Transverse colon (tissue), 4 donors: ENCODE measurements at regions of chr20 and their contacts with region 1.

Region 1: DNA sequence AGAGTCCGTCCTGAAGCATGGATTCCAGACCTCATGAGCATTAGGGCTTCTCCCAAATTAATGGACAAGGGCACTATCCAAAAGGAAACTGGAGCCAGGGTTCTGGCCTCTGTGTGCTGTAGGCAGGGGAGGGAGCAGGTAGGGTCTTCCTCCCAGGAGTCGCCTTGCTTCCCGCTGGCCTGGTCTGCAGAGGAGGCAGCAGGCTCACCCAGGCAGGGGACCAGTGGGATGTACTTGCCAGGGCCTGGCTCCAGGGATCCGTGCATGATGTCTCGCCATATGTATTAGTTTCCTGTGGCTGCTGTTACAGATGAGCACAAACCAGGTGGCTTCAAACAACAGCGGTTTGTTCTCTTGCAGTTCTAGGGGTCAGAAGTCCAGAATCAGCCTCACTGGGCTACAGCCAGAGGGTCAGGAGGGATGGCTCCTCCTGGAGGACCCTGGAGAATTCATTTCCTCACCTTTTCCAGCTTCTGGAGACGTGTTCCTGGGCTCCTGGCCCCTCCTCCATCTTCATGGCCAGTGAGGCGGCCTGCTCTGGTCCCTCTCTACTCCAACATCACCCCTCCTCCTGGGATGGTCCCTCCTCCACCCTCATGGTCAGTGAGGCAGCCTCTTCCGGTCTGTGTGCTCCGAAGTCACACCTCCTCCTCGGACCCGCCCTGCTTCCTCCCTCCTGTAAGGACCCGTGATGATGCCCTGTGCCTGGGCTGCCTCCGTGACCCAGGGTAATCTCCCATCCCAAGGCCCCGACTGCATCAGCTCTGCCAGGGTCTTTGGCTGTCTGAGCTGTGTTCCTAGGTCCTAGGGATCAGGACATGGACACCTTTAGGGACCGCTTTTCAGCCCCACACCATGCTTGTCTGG is 329.1 kb downstream of the CDH4 start:
- DNase-seq: no peak
- H3K4me3 ChIP-seq: no peak overlapping the region
- H3K27ac ChIP-seq: no peak overlapping the region
- H3K4me1 ChIP-seq: no peaks in the 10 kb centered on the region
- H3K27me3 ChIP-seq: no peaks in the 10 kb centered on the region
- CTCF ChIP-seq: no peak
- EP300 ChIP-seq: no peak
- POLR2A ChIP-seq: no peak

Region 2: GRCh38 chr20:60283281-60283680 is 1297.9 kb before region 1 on chr20:
- in situ Hi-C with region 1: no loop called
- intact Hi-C with region 1: no loop called
- DNase-seq: no peak
- H3K4me3 ChIP-seq: no peak overlapping the region
- H3K27ac ChIP-seq: no peak overlapping the region
- H3K4me1 ChIP-seq: no peaks in the 10 kb centered on the region
- H3K27me3 ChIP-seq: no peaks in the 10 kb centered on the region
- CTCF ChIP-seq: no peak
- EP300 ChIP-seq: no peak
- POLR2A ChIP-seq: no peak

Region 3: GRCh38 chr20:61627791-61628415 is 46.7 kb after region 1 on chr20:
- in situ Hi-C with region 1: no loop called
- intact Hi-C with region 1: loop called (anchors 1 kb)
- DNase-seq: no peak
- H3K4me3 ChIP-seq: no peak overlapping the region
- H3K27ac ChIP-seq: no peak overlapping the region
- H3K4me1 ChIP-seq: no peaks in the 10 kb centered on the region
- H3K27me3 ChIP-seq: no peaks in the 10 kb centered on the region
- CTCF ChIP-seq: no peak
- EP300 ChIP-seq: no peak
- POLR2A ChIP-seq: no peak